ENCODE measurements at regions of chr9 and their contacts with region 1.

Region 1: DNA sequence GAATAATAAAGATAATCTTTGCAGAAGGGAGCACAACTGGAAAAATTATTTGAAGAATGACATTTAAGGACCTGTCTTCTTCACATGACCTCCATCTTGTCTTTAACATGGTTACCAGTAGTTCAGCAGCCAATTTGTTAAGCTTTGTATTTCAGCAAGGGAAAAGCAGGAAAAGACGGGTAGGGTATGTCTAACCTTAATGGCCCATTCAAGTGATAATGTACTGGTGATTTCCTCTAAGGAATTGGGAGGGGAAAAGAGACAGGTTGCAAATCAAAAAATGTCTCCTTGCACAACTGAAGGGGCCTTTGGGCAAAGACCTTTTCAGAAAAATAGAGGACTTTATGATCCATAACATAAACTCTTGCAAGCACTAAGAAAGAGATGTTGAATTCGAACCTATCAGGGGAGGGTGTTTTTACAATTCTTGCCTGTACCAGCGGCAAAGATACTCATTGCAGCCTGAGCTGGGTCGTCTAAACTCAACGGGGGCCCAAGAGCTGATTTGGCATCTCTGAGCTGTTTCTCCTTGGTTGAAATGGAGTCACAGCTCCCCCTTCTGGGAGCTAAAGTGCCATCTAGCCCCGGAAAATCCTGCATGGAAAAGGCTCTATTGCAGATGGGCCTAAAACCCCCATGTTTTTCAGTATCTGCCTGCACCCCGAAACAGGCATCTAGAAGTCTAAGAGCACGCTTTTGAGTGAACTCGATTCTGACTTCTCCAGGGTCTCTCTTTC is 3.8 kb downstream of the BRINP1 start:
- DNase-seq: no peak
- ATAC-seq: no peak

Region 2: GRCh38 chr9:117782931-117783788 is 1582.3 kb before region 1 on chr9:
- intact Hi-C with region 1: loop called in 1 of 2 experiments (anchors 10 kb)
- DNase-seq: peak; percentile 76
- ATAC-seq: peak; percentile 87 to 97

Region 3: DNA sequence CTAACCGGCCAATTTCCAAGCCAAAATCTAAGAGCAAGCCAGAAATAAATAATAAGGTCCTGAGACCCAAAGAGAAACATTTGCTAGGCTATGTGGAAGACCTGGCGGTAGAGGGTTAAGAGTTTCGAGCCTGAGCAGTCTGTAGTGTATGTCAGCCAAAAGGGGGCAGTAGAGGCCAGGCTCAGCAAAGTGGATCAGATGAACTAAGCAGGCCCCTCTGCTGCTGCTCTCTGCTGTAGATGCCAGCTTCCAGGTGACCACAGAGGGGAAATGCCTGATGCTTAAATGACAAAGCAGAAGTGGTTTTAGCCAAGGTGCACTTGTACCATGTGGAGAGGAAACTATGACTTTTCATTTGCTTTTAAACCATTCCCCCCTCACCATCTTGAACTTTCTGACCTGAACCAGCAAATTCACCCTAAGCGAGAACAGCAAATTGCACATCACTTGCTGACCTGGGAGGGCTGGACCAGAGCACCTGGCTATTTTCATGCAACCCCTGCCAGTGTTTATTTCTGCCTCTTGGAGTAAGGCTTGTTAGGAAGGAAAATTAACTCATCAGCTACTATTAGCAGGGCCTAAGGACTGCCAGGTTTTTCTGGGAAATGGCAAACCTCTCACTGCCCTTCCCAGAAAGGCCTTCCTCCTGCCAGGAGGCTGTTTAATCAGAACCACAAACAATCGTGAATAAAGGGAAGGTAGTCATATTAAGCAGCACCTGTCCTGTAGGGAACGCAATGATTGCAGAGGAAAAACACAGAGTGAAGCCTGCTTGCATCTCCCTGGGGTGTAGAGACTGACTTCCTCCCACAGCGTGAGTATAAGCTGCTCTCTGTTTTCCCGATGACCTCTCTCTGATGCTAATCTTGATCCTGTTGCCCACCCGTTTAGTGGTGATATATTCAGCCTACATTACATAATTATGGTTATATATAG is 843.1 kb before region 1 on chr9:
- intact Hi-C with region 1: loop called (anchors 5 to 10 kb)
- DNase-seq: peak; percentile 46
- ATAC-seq: peak; percentile 50 to 80

Region 4: GRCh38 chr9:118829334-118829733 is 536.1 kb before region 1 on chr9:
- intact Hi-C with region 1: loop called (anchors 2 to 5 kb)
- DNase-seq: no peak
- ATAC-seq: peak in 1 of 2 donors; percentile 41

Measured in left cardiac atrium (tissue), 4 donors.